Activated CD8-positive, alpha-beta memory T cell treated with anti-CD3 and anti-CD28 coated beads, Interleukin-2, amount 10 ng/mL, durations not matched to agents 7 days and 5 days (primary cell): ENCODE measurements at regions of chr12 and their contacts with region 1.

Region 1: DNA sequence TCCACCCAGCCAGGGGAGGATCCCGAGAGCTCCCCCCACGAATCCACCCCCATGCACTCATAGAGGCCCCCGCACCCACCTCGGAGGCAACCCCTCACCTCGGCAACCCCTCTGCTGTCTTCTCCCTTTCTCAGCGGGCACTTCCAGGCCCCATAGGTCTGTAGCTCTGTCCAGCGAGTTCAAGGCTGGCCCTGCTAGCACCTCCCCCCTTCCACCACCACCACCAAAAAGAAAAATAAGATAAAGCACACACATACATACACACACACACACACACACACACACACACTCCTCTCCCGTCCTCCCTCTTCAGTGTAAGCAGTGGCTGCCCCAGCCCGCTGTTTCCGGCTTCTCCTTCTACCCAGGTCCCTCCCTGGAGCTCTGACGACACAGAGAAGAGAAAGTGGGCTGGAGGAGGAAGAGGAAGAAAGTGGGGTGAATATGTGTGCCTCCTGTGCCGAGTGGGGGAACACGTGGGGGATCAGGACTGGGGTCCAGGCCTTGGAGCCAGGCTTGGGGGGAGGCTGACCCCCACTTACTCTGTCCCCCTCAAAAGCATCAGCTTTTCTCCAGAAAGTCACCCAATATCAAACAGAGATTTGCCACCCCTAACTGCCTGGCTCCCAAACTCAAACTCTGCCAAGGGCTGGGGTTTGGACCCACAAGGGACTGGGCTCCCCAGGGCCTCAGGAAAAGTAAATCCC is at the start of gene STAT6:
- DNase-seq: peak; percentile 95
- ATAC-seq: peak; percentile 76
- H3K4me3 Mint-ChIP-seq: peak within 1 kb of the TSS; percentile 95
- H3K27ac Mint-ChIP-seq: peak within 1 kb of the TSS; percentile 96
- H3K4me1 Mint-ChIP-seq: peaks cover 29% of the 10 kb centered on the region
- H3K27me3 Mint-ChIP-seq: no peaks in the 10 kb centered on the region
- total RNA-seq, gene STAT6: 99.1 to 104 TPM

Region 2: GRCh38 chr12:56922031-56922430 is 189.2 kb before region 1 on chr12:
- CTCF ChIA-PET with region 1: no interaction called
- DNase-seq: no peak
- ATAC-seq: no peak
- H3K4me3 Mint-ChIP-seq: no peak overlapping the region
- H3K27ac Mint-ChIP-seq: no peak overlapping the region
- H3K4me1 Mint-ChIP-seq: no peaks in the 10 kb centered on the region
- H3K27me3 Mint-ChIP-seq: peaks cover 19% of the 10 kb centered on the region

Region 3: GRCh38 chr12:56987551-56988053 is 123.6 kb before region 1 on chr12:
- CTCF ChIA-PET with region 1: interaction called, 16 read pairs
- DNase-seq: peak; percentile 80
- ATAC-seq: peak; percentile 78
- H3K4me3 Mint-ChIP-seq: no peak overlapping the region
- H3K27ac Mint-ChIP-seq: no peak overlapping the region
- H3K4me1 Mint-ChIP-seq: peaks cover 20% of the 10 kb centered on the region
- H3K27me3 Mint-ChIP-seq: peaks cover 10% of the 10 kb centered on the region

Region 4: DNA sequence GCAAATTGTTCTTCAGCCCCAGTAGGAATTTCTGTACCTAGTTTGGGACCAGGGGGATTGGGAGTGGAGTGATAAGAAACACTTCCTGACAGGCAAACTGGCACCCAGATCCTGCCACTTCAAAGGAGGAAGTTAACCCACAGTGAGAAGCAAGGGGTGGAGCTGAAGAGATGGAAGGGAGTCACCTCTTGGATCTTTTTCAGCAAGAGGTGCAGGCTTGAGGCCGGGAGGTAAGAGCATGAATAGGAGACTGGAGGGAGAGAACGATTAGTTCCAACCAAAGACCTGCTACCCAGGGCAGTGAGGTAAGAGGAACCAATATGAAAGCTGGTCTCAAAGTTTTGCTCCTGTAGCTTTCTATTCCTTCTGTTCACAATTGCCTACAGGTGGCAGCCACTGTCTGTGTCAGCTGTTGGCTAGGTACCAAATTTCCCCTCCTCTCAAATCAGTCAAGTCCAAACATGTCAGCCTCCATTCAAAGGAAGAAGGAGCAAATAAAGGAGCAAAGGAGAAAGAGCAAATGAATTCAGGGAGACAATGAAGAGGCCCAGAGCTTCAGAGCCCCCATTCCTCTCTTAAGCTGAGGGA is 80.0 kb before region 1 on chr12:
- CTCF ChIA-PET with region 1: interaction called, 34 read pairs
- DNase-seq: no peak
- ATAC-seq: peak; percentile 53
- H3K4me3 Mint-ChIP-seq: no peak overlapping the region
- H3K27ac Mint-ChIP-seq: peak overlapping the region; percentile 51
- H3K4me1 Mint-ChIP-seq: peaks cover 25% of the 10 kb centered on the region
- H3K27me3 Mint-ChIP-seq: no peaks in the 10 kb centered on the region

Region 5: DNA sequence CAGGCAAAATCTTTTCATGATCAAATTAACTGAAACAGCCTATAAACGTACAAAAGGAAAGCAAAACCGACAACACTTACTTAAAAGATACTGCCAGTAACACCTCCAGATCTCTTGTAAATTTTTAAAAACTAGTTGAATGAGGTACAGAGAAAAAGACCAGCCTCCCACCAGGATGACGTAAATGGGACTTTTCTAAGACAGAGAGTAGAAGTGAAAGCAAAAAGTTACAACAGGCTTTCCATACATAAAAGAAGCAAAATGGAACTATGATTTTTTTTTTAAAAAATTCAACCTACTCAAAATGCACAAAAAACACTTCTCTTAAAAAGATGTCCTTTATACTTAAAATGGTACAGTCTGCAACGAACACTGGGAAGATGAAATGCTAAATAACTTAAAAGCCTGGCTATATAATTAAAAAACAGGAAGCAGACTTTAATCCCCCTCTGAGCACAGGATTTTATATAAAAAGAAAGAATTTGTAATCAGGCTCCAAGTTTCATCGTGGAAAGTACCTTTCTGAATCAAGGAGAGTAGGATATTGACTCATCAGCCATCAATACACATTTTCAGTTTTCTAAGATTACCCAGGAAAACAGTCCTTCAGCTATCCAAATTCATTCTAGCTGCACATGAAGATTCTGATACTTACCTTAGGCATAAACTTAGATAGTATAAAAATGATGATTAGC is 47.0 kb before region 1 on chr12:
- CTCF ChIA-PET with region 1: interaction called, 263 read pairs
- DNase-seq: peak; percentile 70
- ATAC-seq: peak; percentile 91
- H3K4me3 Mint-ChIP-seq: peak overlapping the region; percentile 71
- H3K27ac Mint-ChIP-seq: peak overlapping the region; percentile 95
- H3K4me1 Mint-ChIP-seq: peaks cover 34% of the 10 kb centered on the region
- H3K27me3 Mint-ChIP-seq: no peaks in the 10 kb centered on the region

Region 6: GRCh38 chr12:57124259-57124877 is 13.2 kb after region 1 on chr12:
- CTCF ChIA-PET with region 1: interaction called, 70 read pairs
- DNase-seq: peak; percentile 83
- ATAC-seq: peak; percentile 74
- H3K4me3 Mint-ChIP-seq: no peak overlapping the region
- H3K27ac Mint-ChIP-seq: no peak overlapping the region
- H3K4me1 Mint-ChIP-seq: peaks cover 8% of the 10 kb centered on the region
- H3K27me3 Mint-ChIP-seq: peaks cover 34% of the 10 kb centered on the region

Region 7: DNA sequence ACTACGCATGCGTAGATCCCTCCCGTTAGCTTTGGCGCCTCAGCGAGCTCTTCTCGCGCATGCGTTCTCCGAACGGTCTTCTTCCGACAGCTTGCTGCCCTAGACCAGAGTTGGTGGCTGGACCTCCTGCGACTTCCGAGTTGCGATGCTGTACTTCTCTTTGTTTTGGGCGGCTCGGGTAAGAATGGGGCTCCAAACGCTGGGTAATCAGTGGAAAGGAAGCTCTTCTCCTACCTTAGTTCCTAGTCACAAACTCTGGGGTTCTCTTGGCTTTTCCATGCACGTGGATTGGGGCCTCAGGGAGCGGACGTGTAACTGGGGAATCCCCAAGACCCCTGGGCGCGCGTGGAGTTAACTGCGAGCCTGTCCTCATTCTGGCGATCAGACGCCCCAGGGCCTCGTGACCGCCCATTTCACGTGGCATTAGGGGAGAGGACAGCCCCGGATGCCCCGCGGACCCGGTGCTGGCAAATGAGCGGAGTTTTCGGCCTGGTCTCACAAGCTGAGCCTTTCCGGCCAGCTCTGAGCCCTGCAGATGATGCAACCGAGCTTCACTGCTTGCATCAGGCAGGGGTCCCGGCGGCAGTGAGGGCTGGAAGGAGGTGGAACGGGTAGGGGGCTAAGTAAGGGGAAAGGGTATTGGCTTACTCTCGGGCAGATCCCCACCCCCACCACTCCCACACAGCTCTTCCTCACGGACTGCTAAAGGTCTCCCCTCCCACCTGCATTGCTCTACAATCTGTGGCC is 118.6 kb after region 1 on chr12 and contains the start of gene SHMT2:
- CTCF ChIA-PET with region 1: interaction called, 11 read pairs
- DNase-seq: peak; percentile 96
- ATAC-seq: peak; percentile 79
- H3K4me3 Mint-ChIP-seq: peak within 1 kb of the TSS; percentile 95
- H3K27ac Mint-ChIP-seq: peak within 1 kb of the TSS; percentile 94
- H3K4me1 Mint-ChIP-seq: peaks cover 52% of the 10 kb centered on the region
- H3K27me3 Mint-ChIP-seq: peaks cover 24% of the 10 kb centered on the region
- total RNA-seq, gene SHMT2: 194 to 357 TPM